ENCODE measurements at regions of chr14 and their contacts with region 1.

Region 1: GRCh38 chr14:22570132-22570949 is 18.7 kb downstream of the DAD1 start:
- DNase-seq: peak; percentile 91
- ATAC-seq: peak; percentile 81
- H3K4me3 Mint-ChIP-seq: peak overlapping the region; percentile 86
- H3K27ac Mint-ChIP-seq: peak overlapping the region; percentile 94
- H3K4me1 Mint-ChIP-seq: peaks cover 60% of the 10 kb centered on the region
- H3K27me3 Mint-ChIP-seq: no peaks in the 10 kb centered on the region
- CTCF ChIP-seq: peak; percentile 91

Region 2: GRCh38 chr14:21987937-21988336 is 582.4 kb before region 1 on chr14:
- CTCF ChIA-PET with region 1: interaction called, 16 read pairs
- POLR2A ChIA-PET with region 1: interaction called, 5 read pairs
- intact Hi-C with region 1: no loop called
- DNase-seq: peak; percentile 38
- ATAC-seq: peak; percentile 74
- H3K4me3 Mint-ChIP-seq: peak overlapping the region; percentile 54
- H3K27ac Mint-ChIP-seq: peak overlapping the region; percentile 89
- H3K4me1 Mint-ChIP-seq: peaks cover 27% of the 10 kb centered on the region
- H3K27me3 Mint-ChIP-seq: peaks cover 1% of the 10 kb centered on the region
- CTCF ChIP-seq: peak; percentile 50

Region 3: DNA sequence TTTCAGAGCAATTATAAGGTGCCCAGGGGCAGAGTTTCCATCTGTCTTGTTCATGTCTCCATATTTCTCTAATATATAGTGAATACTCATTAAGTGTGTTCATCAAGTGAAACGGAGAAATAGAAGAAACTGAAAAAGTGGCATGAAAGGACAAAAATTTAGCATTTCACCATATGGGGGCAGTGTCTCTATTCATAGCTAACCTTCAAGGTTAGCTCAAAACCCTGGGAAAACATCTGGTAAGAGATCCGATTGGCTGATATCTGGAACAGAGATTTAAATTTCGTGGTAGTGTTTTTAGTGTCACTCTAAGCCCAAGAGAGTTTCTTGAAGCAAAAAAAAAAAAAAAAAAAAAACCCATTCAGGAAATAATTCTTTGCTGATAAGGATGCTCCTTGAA is 348.8 kb before region 1 on chr14:
- CTCF ChIA-PET with region 1: interaction called, 11 read pairs
- POLR2A ChIA-PET with region 1: no interaction called
- intact Hi-C with region 1: loop called (anchors 10 kb)
- DNase-seq: no peak
- ATAC-seq: peak; percentile 39
- H3K4me3 Mint-ChIP-seq: peak overlapping the region; percentile 42
- H3K27ac Mint-ChIP-seq: peak overlapping the region; percentile 69
- H3K4me1 Mint-ChIP-seq: peaks cover 12% of the 10 kb centered on the region
- H3K27me3 Mint-ChIP-seq: no peaks in the 10 kb centered on the region
- CTCF ChIP-seq: no peak

Region 4: GRCh38 chr14:22549981-22550673 is 20.2 kb before region 1 on chr14:
- CTCF ChIA-PET with region 1: interaction called, 249 read pairs
- POLR2A ChIA-PET with region 1: interaction called, 397 read pairs
- intact Hi-C with region 1: no loop called
- DNase-seq: peak; percentile 90
- ATAC-seq: peak; percentile 57
- H3K4me3 Mint-ChIP-seq: peak overlapping the region; percentile 79
- H3K27ac Mint-ChIP-seq: peak overlapping the region; percentile 94
- H3K4me1 Mint-ChIP-seq: peaks cover 92% of the 10 kb centered on the region
- H3K27me3 Mint-ChIP-seq: no peaks in the 10 kb centered on the region
- CTCF ChIP-seq: no peak

Region 5: GRCh38 chr14:22653012-22653621 is 82.8 kb after region 1 on chr14:
- CTCF ChIA-PET with region 1: interaction called, 82 read pairs
- POLR2A ChIA-PET with region 1: interaction called, 6 read pairs
- intact Hi-C with region 1: loop called (anchors 5 kb)
- DNase-seq: peak; percentile 66
- ATAC-seq: peak; percentile 89
- H3K4me3 Mint-ChIP-seq: no peak overlapping the region
- H3K27ac Mint-ChIP-seq: no peak overlapping the region
- H3K4me1 Mint-ChIP-seq: no peaks in the 10 kb centered on the region
- H3K27me3 Mint-ChIP-seq: peaks cover 2% of the 10 kb centered on the region
- CTCF ChIP-seq: peak; percentile 80

Region 6: DNA sequence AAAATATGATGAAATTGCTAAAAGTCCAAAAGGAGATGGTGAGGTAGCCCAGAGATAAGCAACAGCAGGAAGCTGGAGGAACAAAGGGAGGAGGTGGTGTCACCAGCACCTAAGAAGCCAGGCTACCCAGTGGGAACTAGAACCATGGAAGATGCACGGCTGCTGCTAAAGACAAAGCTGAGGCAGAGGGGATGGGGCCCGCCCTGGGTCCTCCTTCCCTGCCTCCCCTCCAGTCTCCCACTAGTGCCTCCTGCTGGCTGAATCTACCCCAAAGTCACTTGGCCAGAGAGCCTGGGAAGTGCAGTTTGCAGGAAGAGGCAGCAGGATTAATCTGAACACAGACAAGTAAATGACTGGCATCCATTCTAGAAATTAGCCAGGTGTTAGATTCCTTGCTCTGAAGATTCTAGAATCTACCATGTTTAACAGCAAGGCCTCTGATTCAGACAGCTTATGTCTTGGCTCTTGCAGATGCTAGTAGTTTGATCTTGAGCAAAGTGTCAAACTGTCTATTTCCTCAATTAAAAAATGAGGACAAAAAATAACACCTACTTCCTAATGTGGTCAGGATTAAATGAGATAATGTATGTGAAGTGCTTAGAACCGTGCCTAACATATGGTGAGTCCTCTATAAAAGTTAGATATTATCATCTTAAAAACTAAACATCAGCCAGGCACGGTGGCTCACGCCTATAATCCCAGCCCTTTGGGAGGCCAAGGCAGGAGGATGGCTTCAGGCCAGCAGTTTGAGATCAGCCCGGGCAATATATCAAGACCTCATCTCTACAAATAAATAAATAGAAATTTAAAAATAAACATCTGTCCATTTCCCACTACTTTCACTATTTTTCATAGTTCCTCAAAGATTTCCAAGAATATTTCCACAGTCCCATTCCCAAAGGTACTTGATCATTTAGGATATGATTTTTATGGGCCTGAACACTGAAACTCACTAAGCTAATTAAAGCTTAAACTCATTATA is 295.4 kb after region 1 on chr14:
- CTCF ChIA-PET with region 1: interaction called, 14 read pairs
- POLR2A ChIA-PET with region 1: interaction called, 3 read pairs
- intact Hi-C with region 1: no loop called
- DNase-seq: peak; percentile 33
- ATAC-seq: no peak
- H3K4me3 Mint-ChIP-seq: no peak overlapping the region
- H3K27ac Mint-ChIP-seq: no peak overlapping the region
- H3K4me1 Mint-ChIP-seq: peaks cover 6% of the 10 kb centered on the region
- H3K27me3 Mint-ChIP-seq: peaks cover 10% of the 10 kb centered on the region
- CTCF ChIP-seq: peak; percentile 28